ENCODE measurements at regions of chrX and their contacts with region 1.

Region 1: GRCh38 chrX:123993326-123993725 is 31.8 kb downstream of the STAG2 start:
- DNase-seq: no peak
- ATAC-seq: no peak
- H3K4me3 Mint-ChIP-seq: no peak overlapping the region
- H3K27ac Mint-ChIP-seq: no peak overlapping the region
- H3K4me1 Mint-ChIP-seq: peaks cover 50% of the 10 kb centered on the region
- H3K27me3 Mint-ChIP-seq: no peaks in the 10 kb centered on the region
- CTCF ChIP-seq: no peak

Region 2: DNA sequence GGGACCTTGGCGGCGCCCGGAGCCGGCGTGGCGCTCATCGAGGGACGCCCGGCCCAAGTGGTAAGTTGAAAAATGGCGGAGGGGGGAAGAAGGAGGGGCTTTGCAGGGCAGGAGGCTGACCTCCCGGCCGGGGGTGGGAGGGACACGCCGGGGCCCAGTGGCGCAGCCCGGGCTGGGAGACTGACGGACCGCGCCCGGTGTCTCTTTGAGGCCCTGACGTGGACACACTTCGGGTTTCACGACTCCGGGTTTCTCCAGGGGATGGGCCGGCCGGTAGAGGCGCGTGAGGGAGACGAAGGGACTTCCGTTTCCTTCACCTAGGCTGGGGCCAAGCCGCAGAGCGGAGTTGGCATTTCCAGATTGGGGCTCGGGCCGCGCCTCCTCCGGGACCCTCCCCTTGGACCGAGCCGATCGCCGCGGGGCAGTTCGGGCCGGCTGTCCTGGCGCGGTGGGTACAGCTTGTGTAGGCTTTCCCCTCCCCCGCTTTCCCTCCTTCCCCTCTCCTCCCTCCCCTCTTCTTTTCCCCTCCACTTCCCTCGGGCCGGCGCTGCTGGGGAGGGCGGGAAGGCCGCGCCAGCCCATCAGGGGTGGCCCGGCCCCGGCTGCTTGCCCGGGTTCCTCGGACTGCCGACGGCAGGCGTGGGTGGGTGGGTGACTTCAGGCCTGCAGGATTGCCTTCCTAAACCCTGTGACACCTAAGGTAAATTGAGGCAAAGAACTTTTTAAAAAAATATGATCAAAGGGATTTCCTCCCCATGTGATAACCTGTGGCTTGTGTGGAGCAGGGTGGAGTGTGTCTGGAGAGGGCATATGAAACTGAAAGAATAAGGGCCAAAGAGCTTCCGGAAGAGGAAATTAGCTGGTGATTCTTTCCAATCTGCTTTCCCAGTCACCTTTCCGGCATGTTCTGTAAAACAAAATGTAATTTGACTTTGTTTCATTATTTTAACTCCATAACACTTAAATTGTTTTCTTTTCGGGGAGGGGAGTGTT is 133.2 kb before region 1 on chrX and contains the start of gene XIAP:
- CTCF ChIA-PET with region 1: no interaction called
- POLR2A ChIA-PET with region 1: no interaction called
- intact Hi-C with region 1: no loop called
- DNase-seq: peak; percentile 69
- ATAC-seq: peak; percentile 82
- H3K4me3 Mint-ChIP-seq: peak within 1 kb of the TSS; percentile 89
- H3K27ac Mint-ChIP-seq: peak within 1 kb of the TSS; percentile 88
- H3K4me1 Mint-ChIP-seq: peaks cover 19% of the 10 kb centered on the region
- H3K27me3 Mint-ChIP-seq: no peaks in the 10 kb centered on the region
- CTCF ChIP-seq: no peak
- total RNA-seq, gene XIAP: 32.0 and 43.6 TPM in 2 replicates

Region 3: DNA sequence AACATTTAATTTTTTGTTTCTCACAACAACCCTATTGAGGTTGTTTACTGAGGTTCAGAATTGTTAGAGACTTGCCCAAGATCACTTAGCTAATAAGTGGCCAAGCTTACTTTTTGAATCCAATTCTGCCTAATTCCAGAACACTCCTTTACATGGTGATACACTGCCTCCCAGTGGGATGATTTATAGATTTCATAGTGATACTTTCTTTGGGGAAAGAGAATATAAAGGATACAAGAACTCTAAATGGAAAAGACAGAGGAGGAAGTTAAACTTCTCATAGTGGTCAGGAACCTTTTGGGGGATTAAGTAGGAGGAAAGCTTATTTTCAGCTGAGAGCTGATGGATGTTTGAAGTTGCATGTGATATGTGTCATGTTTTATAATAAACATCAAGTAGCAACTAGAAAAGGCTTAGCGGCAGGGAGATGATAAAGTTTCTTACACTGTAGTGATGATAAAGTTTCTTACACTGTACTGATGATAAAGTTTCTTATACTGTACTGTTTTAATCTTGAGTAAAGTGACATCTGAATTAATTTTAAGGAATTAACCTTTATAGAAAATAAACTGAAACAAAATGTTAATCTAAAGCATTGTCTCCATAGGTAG is 16.5 kb before region 1 on chrX:
- CTCF ChIA-PET with region 1: no interaction called
- POLR2A ChIA-PET with region 1: no interaction called
- intact Hi-C with region 1: loop called (anchors 2 kb)
- DNase-seq: no peak
- ATAC-seq: no peak
- H3K4me3 Mint-ChIP-seq: peak overlapping the region; percentile 28
- H3K27ac Mint-ChIP-seq: no peak overlapping the region
- H3K4me1 Mint-ChIP-seq: peaks cover 57% of the 10 kb centered on the region
- H3K27me3 Mint-ChIP-seq: no peaks in the 10 kb centered on the region
- CTCF ChIP-seq: no peak

Region 4: GRCh38 chrX:124005228-124005627 is 11.9 kb after region 1 on chrX:
- CTCF ChIA-PET with region 1: no interaction called
- POLR2A ChIA-PET with region 1: no interaction called
- intact Hi-C with region 1: loop called (anchors 2 kb)
- DNase-seq: no peak
- ATAC-seq: peak; percentile 74
- H3K4me3 Mint-ChIP-seq: peak overlapping the region; percentile 8
- H3K27ac Mint-ChIP-seq: peak overlapping the region; percentile 18
- H3K4me1 Mint-ChIP-seq: peaks cover 49% of the 10 kb centered on the region
- H3K27me3 Mint-ChIP-seq: no peaks in the 10 kb centered on the region
- CTCF ChIP-seq: no peak